ENCODE measurements at regions of chr11 and their contacts with region 1.

Region 1: GRCh38 chr11:119067371-119068222 is at the start of gene VPS11:
- DNase-seq: peak; percentile 98

Region 2: GRCh38 chr11:119057000-119057769 is 10.4 kb before region 1 on chr11 and contains the start of gene HYOU1:
- CTCF ChIA-PET with region 1: interaction called, 4 read pairs
- POLR2A ChIA-PET with region 1: interaction called, 28 read pairs
- DNase-seq: peak; percentile 96

Region 3: DNA sequence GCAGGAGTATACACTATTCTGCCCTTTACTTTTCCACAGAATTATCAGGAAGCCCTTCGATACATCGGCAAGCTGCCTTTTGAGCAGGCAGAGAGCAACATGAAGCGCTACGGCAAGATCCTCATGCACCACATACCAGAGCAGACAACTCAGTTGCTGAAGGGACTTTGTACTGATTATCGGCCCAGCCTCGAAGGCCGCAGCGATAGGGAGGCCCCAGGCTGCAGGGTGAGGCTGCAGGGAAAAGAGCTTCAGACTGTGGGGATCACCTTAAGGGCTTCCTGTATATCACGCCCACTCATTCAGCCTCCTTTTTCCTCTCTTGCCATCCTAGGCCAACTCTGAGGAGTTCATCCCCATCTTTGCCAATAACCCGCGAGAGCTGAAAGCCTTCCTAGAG is 10.2 kb after region 1 on chr11:
- CTCF ChIA-PET with region 1: no interaction called
- POLR2A ChIA-PET with region 1: interaction called, 11 read pairs
- DNase-seq: no peak